Head of caudate nucleus (tissue), 42 donors: ENCODE measurements at regions of chr19 and their contacts with region 1.

Region 1: GRCh38 chr19:36169084-36169760 is 17.0 kb upstream of the COX7A1 start:
- DNase-seq: no peak

Region 2: GRCh38 chr19:36060430-36060829 is 108.8 kb before region 1 on chr19:
- intact Hi-C with region 1: loop called (anchors 2 kb)
- DNase-seq: peak; percentile 59 to 93 (median 84)

Region 3: GRCh38 chr19:36132489-36132891 is 36.7 kb before region 1 on chr19:
- intact Hi-C with region 1: loop called (anchors 2 kb)
- DNase-seq: no peak